ENCODE measurements at regions of chr6 and their contacts with region 1.

Region 1: GRCh38 chr6:153032255-153032882 is 29.9 kb upstream of the MTRF1L start:
- DNase-seq: peak in 1 of 2 donors; percentile 20
- ATAC-seq: no peak
- H3K4me3 ChIP-seq: no peak overlapping the region
- H3K4me3 Mint-ChIP-seq: no peak overlapping the region
- H3K27ac ChIP-seq: no peak overlapping the region
- H3K27ac Mint-ChIP-seq: no peak overlapping the region
- H3K4me1 ChIP-seq: no peaks in the 10 kb centered on the region
- H3K4me1 Mint-ChIP-seq: no peaks in the 10 kb centered on the region
- H3K27me3 ChIP-seq: no peaks in the 10 kb centered on the region
- H3K27me3 Mint-ChIP-seq: peaks cover 0 to 10% of the 10 kb centered on the region in 2 donors
- CTCF ChIP-seq: peak; percentile 24

Region 2: DNA sequence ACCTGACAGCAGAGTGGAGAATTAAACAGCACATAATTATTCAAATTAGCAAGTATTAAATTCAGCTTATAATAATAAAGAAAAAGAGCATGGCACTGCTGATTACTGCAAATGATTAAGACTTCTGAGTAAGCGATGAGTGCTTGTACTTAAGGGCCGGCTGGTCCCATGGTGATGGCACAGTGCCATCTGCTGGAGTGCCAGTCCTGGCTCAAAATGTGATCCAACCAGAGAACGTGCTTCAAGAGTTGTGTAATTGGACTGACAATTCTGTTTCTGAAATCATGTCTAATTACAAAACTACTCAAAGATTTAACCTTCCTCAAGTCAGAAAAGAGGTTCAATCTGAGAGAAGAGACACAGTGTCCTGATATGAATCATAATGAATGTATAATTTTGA is 280.3 kb after region 1 on chr6:
- intact Hi-C with region 1: loop called (anchors 1 kb)
- DNase-seq: peak in 1 of 2 donors; percentile 46
- ATAC-seq: peak in 1 of 3 donors; percentile 75
- H3K4me3 ChIP-seq: no peak overlapping the region
- H3K4me3 Mint-ChIP-seq: no peak overlapping the region
- H3K27ac ChIP-seq: no peak overlapping the region
- H3K27ac Mint-ChIP-seq: no peak overlapping the region
- H3K4me1 ChIP-seq: no peaks in the 10 kb centered on the region
- H3K4me1 Mint-ChIP-seq: no peaks in the 10 kb centered on the region
- H3K27me3 ChIP-seq: no peaks in the 10 kb centered on the region
- H3K27me3 Mint-ChIP-seq: peaks cover 7% of the 10 kb centered on the region in 2 donors
- CTCF ChIP-seq: peak; percentile 55

Region 3: GRCh38 chr6:153511896-153512496 is 479.6 kb after region 1 on chr6:
- intact Hi-C with region 1: loop called (anchors 5 kb)
- DNase-seq: peak in 1 of 2 donors; percentile 26
- ATAC-seq: no peak
- H3K4me3 ChIP-seq: no peak overlapping the region
- H3K4me3 Mint-ChIP-seq: no peak overlapping the region
- H3K27ac ChIP-seq: no peak overlapping the region
- H3K27ac Mint-ChIP-seq: no peak overlapping the region
- H3K4me1 ChIP-seq: no peaks in the 10 kb centered on the region
- H3K4me1 Mint-ChIP-seq: no peaks in the 10 kb centered on the region
- H3K27me3 ChIP-seq: no peaks in the 10 kb centered on the region
- H3K27me3 Mint-ChIP-seq: no peaks in the 10 kb centered on the region
- CTCF ChIP-seq: no peak

Region 4: DNA sequence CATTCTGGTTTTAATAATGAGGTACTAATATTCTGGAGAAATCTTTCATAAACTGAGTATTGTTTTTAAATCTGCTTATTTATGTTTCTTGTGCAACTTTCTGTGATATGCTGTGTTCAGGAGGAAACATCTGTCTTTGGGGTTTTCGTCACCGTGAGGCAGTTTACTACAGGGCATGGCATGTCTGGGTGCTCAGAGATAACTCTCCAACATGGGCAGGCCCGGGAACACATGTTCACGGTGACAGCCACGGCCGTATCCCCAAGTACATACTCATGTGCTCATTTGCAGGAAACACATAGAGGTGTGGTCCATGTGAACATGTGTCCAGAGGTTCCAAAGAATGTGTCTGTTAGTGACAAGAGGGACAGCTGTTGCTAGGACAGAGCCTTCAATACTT is 1540.2 kb after region 1 on chr6:
- intact Hi-C with region 1: no loop called
- DNase-seq: no peak
- ATAC-seq: no peak
- H3K4me3 ChIP-seq: no peak overlapping the region
- H3K4me3 Mint-ChIP-seq: no peak overlapping the region
- H3K27ac ChIP-seq: no peak overlapping the region
- H3K27ac Mint-ChIP-seq: no peak overlapping the region
- H3K4me1 ChIP-seq: no peaks in the 10 kb centered on the region
- H3K4me1 Mint-ChIP-seq: no peaks in the 10 kb centered on the region
- H3K27me3 ChIP-seq: no peaks in the 10 kb centered on the region
- H3K27me3 Mint-ChIP-seq: peaks cover 0 to 12% of the 10 kb centered on the region in 2 donors
- CTCF ChIP-seq: no peak

Measured in natural killer cell (primary cell).